ENCODE measurements at regions of chr12 and their contacts with region 1.

Region 1: GRCh38 chr12:94101738-94102660 is 46.4 kb upstream of the PLXNC1 start:
- DNase-seq: peak; percentile 84
- H3K4me3 ChIP-seq: peak overlapping the region; percentile 75
- H3K27ac ChIP-seq: peak overlapping the region; percentile 63
- H3K4me1 ChIP-seq: peaks cover 15% of the 10 kb centered on the region
- H3K27me3 ChIP-seq: peaks cover 22% of the 10 kb centered on the region
- CTCF ChIP-seq: peak; percentile 88

Region 2: GRCh38 chr12:93502802-93503623 is 599.0 kb before region 1 on chr12:
- intact Hi-C with region 1: loop called (anchors 2 kb)
- DNase-seq: no peak
- H3K4me3 ChIP-seq: no peak overlapping the region
- H3K27ac ChIP-seq: no peak overlapping the region
- H3K4me1 ChIP-seq: no peaks in the 10 kb centered on the region
- H3K27me3 ChIP-seq: no peaks in the 10 kb centered on the region
- CTCF ChIP-seq: peak; percentile 85

Region 3: GRCh38 chr12:93766796-93767523 is 335.0 kb before region 1 on chr12:
- intact Hi-C with region 1: loop called (anchors 10 kb)
- DNase-seq: no peak
- H3K4me3 ChIP-seq: no peak overlapping the region
- H3K27ac ChIP-seq: peak overlapping the region; percentile 77
- H3K4me1 ChIP-seq: peaks cover 54% of the 10 kb centered on the region
- H3K27me3 ChIP-seq: no peaks in the 10 kb centered on the region
- CTCF ChIP-seq: peak; percentile 75

Measured in left ventricle myocardium inferior (tissue), 1 donor.